WTC11 (cell line): ENCODE measurements at regions of chr15 and their contacts with region 1.

Region 1: DNA sequence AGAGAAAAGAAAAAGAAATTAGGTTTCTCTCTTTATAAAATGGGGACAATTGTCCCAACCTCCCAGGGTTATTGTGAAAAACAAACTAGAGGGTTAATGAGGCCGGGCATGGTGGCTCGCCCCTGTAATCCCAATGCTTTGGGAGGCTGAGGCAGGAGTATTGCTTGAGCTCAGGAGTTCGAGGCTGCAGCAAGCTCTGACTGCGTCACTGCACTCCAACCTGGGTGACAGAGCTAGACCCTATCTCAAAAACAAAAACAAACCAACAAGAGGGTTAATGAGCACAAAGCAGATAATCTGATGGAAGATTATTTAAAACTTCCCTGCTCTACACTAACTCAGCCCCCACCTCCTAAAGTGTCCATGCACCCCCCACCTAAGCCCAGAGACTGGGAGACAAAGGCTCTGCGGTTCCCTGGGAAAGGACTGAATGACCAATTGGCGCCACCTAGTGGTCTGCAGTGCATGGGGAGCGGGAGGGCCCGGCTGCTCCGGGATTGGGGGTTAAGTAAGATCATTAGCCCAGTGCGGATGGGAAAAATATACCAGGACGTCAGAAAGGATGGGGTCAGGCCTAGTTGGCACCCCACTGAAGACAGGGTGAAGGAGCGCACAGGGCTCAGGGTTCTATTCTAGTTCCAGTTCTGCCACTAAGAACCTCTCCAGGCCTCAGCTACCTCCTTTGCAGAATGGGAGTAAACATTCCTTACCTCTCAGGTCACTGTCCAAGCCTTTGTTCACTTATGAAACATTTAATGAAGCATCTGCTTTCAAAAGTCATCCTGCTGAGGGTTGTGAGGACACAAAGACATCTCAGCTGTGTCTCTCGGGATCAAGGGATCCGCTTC is 15.6 kb downstream of the PIF1 start:
- DNase-seq: peak; percentile 95
- ATAC-seq: peak; percentile 4
- H3K4me3 Mint-ChIP-seq: peak overlapping the region; percentile 63
- H3K27ac Mint-ChIP-seq: peak overlapping the region; percentile 97
- H3K4me1 Mint-ChIP-seq: peaks cover 82% of the 10 kb centered on the region
- H3K27me3 Mint-ChIP-seq: no peaks in the 10 kb centered on the region
- CTCF ChIP-seq: peak; percentile 86

Region 2: DNA sequence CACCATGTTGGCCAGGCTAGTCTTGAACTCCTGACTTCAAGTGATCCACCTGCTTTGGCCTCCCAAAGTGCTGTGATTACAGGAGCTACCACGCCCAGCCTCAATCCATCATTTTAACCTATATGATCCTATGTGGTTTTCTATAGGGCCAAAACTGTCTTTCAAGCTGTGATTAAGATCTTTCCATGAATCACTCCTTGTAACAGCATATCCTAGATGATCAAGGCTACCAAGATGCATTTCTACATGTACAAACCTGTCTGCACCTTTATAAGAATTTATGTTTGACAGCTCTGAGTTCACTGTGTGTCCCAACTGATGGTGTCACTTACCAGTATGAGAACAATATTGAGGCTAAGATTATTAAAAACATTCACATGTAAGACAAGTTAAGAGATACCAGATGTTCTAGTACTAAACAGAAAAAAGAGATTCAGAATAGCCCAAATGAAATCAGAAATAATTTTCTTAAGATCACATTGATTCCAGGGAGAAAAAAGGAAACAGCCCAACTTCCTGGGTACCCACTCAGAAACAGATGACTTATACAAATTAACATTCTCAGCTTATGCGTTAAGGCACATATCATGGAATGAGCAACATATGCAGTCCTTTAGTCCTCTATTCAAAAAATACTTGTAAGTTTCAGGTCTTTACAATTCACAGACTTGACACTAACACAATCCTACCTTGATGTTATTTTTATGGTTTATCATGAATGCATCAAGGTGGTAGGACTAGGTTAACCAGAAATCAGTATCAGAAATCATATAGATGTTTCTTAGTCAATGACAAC is 622.3 kb before region 1 on chr15:
- CTCF ChIA-PET with region 1: no interaction called
- POLR2A ChIA-PET with region 1: no interaction called
- DNase-seq: no peak
- ATAC-seq: no peak
- H3K4me3 Mint-ChIP-seq: no peak overlapping the region
- H3K27ac Mint-ChIP-seq: no peak overlapping the region
- H3K4me1 Mint-ChIP-seq: no peaks in the 10 kb centered on the region
- H3K27me3 Mint-ChIP-seq: no peaks in the 10 kb centered on the region
- CTCF ChIP-seq: no peak

Region 3: GRCh38 chr15:64478863-64479262 is 331.0 kb before region 1 on chr15:
- CTCF ChIA-PET with region 1: no interaction called
- POLR2A ChIA-PET with region 1: no interaction called
- DNase-seq: no peak
- ATAC-seq: no peak
- H3K4me3 Mint-ChIP-seq: no peak overlapping the region
- H3K27ac Mint-ChIP-seq: peak overlapping the region; percentile 92; the same call in 1 of the 2 replicates
- H3K4me1 Mint-ChIP-seq: peaks cover 15% of the 10 kb centered on the region
- H3K27me3 Mint-ChIP-seq: no peaks in the 10 kb centered on the region
- CTCF ChIP-seq: no peak

Region 4: DNA sequence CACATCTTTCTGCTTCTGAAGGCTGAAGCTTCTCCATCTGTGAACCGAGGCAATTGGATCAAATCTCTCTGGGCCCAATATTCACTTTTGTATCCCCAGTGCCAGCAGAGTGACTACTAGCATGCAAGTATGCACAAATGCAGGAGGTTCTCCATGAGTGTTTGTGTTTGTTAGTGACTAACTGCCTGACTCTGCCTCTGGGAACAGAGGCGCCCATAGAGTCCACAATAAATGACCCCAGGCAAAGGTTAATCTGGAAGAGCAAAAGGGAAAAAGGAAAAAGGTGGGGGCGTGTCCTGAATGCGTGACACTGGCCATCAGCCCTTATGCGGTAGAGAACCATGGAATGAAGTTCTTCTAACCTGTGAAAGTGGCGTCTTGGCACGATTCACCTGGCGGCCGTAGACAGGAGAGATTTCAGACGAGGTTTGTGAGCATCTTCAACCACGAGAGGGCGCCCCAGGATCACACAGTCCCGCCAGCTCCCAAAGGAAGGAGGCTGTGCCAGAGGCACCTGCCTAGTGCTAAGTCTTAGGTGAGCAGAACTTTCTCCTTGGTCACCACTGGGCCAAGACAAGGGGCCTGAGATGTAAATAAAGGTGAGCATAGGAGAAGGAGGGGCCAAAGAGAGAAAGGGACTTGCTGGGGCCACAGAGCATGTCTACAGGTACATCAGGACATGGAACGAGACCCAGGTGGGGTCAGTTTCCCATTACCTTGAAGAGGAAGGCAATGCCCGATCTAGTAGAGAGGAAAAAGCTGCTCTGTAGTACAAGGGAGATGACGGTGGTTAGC is 78.7 kb before region 1 on chr15:
- CTCF ChIA-PET with region 1: interaction called, 108 read pairs
- POLR2A ChIA-PET with region 1: interaction called, 23 read pairs
- DNase-seq: peak; percentile 95
- ATAC-seq: peak; percentile 76
- H3K4me3 Mint-ChIP-seq: no peak overlapping the region
- H3K27ac Mint-ChIP-seq: peak overlapping the region; percentile 94
- H3K4me1 Mint-ChIP-seq: peaks cover 20% of the 10 kb centered on the region
- H3K27me3 Mint-ChIP-seq: no peaks in the 10 kb centered on the region
- CTCF ChIP-seq: peak; percentile 88

Region 5: GRCh38 chr15:64749999-64750657 is 59.7 kb before region 1 on chr15:
- CTCF ChIA-PET with region 1: interaction called, 122 read pairs
- POLR2A ChIA-PET with region 1: interaction called, 18 read pairs
- DNase-seq: peak; percentile 66
- ATAC-seq: peak; percentile 87
- H3K4me3 Mint-ChIP-seq: no peak overlapping the region
- H3K27ac Mint-ChIP-seq: peak overlapping the region; percentile 98
- H3K4me1 Mint-ChIP-seq: peaks cover 56% of the 10 kb centered on the region
- H3K27me3 Mint-ChIP-seq: no peaks in the 10 kb centered on the region
- CTCF ChIP-seq: no peak

Region 6: DNA sequence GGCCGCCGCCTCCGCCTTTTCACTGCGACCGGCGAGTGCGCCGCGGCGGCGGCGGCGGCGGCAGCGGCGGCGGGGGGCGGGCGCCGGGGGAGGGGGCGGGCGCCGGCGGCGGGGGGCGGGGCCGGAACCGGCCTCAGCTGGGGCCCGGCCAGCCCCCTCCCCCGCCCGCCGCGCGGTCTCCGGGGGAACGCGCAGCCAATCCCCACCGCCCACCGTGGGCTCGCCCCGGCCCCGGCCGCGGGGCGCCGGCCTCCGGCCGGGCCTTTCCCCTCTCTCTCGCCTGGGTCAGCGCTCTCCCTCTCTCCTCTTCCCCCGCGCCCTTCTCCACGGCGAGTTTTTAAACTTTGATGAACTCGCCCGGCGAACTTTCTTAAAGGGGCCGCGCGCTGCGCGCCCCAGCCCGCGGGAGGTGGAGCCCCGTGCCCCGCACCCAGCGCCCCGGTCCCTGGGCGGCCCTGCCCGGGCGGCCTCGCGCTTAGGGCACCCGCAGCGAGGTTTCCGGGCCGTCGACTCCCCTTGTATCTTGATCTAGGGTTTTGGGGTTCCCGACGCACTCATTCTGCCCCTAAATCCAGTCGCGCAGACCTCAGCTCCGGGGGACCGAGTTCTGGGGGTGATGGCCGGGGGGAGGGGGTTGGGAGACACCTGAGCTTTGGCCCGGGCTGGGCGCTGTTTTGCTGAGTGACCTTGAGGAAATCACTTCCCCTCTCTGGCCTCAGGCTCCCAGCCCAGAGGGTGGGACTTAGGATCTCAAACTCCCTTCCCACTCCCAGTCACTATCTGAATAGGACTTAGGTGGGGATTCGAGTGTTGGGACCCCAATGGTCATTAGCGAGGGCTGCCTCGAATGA is 34.1 kb before region 1 on chr15 and contains the start of gene RBPMS2:
- CTCF ChIA-PET with region 1: interaction called, 86 read pairs
- POLR2A ChIA-PET with region 1: interaction called, 28 read pairs
- DNase-seq: peak; percentile 54
- ATAC-seq: peak; percentile 30
- H3K4me3 Mint-ChIP-seq: peak within 1 kb of the TSS; percentile 94
- H3K27ac Mint-ChIP-seq: peak within 1 kb of the TSS; percentile 95
- H3K4me1 Mint-ChIP-seq: peaks cover 68% of the 10 kb centered on the region
- H3K27me3 Mint-ChIP-seq: no peaks in the 10 kb centered on the region
- CTCF ChIP-seq: no peak
- total RNA-seq, gene RBPMS2: 195 to 210 TPM (median 202 TPM) in 3 replicates

Region 7: DNA sequence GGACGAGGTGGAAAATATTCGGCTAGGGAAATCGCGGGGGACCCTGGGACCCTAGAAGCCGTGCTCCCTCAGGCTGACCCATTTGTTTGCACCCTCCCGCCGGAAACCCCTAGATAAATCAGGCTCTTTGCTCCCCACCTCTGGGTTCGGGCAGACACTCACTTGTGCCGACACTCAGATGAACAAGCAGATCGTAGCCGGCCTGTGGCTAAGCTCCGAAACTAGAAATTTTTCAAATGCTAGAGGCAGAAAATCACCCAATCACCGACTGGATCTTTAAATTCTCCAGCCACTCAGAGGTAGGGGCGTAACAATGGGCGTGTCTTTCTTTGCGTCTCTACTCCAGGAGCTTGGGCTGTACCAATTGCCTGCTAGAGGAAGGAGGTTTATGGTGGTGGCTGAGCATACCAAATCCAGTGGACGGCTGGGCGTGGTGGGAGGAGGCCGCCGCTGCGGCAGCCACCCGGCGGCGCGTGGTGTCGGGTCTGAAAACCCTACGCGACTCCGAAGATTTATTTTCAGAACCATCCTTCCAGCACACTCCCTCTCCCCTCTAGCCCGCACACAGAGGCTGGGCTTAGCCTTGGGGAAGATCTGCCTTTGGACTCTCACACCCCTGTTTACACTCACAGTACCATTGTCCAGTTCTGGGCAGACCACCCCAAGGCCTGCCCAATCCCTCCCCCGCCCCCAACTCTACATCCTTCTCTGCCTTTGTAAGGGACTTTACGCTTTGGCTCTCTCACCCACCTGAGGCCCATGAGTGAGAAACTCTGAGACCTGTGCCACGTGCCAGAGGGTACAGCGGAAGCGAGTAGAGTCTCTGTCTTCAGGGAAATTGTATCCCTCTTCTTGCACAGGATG is 15.8 kb after region 1 on chr15 and contains the start of gene PIF1:
- CTCF ChIA-PET with region 1: interaction called, 21 read pairs
- POLR2A ChIA-PET with region 1: interaction called, 45 read pairs
- DNase-seq: peak; percentile 91
- ATAC-seq: peak; percentile 94
- H3K4me3 Mint-ChIP-seq: peak within 1 kb of the TSS; percentile 92
- H3K27ac Mint-ChIP-seq: peak within 1 kb of the TSS; percentile 92
- H3K4me1 Mint-ChIP-seq: peaks cover 31% of the 10 kb centered on the region
- H3K27me3 Mint-ChIP-seq: no peaks in the 10 kb centered on the region
- CTCF ChIP-seq: no peak
- total RNA-seq, gene PIF1: 174 to 249 TPM (median 184 TPM) in 3 replicates

Region 8: DNA sequence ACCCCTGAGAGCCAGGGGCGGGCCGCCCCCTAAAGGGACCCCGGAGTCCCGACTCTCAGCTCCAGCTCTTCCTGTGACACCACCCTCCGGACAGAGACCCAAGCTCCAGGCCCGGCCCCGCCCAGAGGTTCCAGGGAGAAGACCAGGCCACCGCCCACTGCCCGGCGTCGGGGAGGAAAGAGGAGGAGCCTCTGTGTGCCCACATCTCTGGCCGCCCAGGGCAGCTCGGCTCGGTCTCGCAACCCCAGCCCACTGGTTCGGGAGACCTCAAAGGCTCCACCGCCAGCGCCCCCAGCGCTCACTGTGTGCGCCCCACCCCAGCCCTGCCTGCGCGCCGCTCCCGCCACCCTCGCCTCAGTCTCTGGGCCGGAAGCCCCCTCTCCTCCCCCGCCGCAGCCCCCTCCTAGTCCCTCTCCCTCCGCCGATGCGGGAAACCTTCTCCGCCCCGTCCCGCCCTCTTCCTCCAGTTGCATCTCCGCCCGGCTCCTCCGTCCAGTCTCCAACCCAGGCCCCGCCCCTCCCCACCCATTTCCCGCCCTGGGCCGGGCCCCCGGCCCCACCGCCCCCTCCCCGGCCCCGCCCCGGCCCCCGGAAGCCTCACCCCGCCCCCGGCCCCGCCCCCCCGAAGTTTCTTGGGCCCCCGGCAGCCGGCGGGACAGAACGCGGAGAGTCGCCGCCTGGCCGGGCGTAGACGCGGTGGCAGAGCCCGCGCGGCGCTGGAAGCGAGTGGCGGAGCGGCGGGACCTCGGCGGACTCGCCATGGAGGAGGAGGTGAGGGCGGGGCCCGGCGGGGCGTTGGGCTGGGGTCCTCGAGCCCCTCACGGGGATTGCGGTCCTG is 31.6 kb after region 1 on chr15 and contains the start of gene PLEKHO2:
- CTCF ChIA-PET with region 1: interaction called, 68 read pairs
- POLR2A ChIA-PET with region 1: interaction called, 25 read pairs
- DNase-seq: peak; percentile 98
- ATAC-seq: peak; percentile 89
- H3K4me3 Mint-ChIP-seq: peak within 1 kb of the TSS; percentile 91
- H3K27ac Mint-ChIP-seq: peak within 1 kb of the TSS; percentile 86
- H3K4me1 Mint-ChIP-seq: peaks cover 68% of the 10 kb centered on the region
- H3K27me3 Mint-ChIP-seq: no peaks in the 10 kb centered on the region
- CTCF ChIP-seq: no peak
- total RNA-seq, gene PLEKHO2: 21.6 to 22.1 TPM (median 21.9 TPM) in 3 replicates